Dorsolateral prefrontal cortex (tissue), 120 donors: ENCODE measurements at regions of chr15 and their contacts with region 1.

Region 1: GRCh38 chr15:29103824-29104565 is 165.6 kb downstream of the NSMCE3 start:
- DNase-seq: peak in 9 of 10 donors; percentile 56 to 88 (median 76)
- H3K4me3 ChIP-seq: peak overlapping the region in 55 of 59 donors; percentile 9 to 60 (median 44)
- H3K27ac ChIP-seq: peak overlapping the region in 56 of 59 donors; percentile 0 to 89 (median 77)
- H3K27me3 ChIP-seq: no peaks in the 10 kb centered on the region
- CTCF ChIP-seq: peak; percentile 55 to 97 (median 90)

Region 2: GRCh38 chr15:28783873-28784272 is 320.1 kb before region 1 on chr15:
- intact Hi-C with region 1: loop called in 1 of 2 experiments (anchors 5 kb)
- DNase-seq: peak in 1 of 10 donors; percentile 33
- H3K4me3 ChIP-seq: no peak overlapping the region
- H3K27ac ChIP-seq: no peak overlapping the region
- H3K27me3 ChIP-seq: peaks cover 0 to 2% (median 0%) of the 10 kb centered on the region in 45 donors
- CTCF ChIP-seq: no peak

Region 3: DNA sequence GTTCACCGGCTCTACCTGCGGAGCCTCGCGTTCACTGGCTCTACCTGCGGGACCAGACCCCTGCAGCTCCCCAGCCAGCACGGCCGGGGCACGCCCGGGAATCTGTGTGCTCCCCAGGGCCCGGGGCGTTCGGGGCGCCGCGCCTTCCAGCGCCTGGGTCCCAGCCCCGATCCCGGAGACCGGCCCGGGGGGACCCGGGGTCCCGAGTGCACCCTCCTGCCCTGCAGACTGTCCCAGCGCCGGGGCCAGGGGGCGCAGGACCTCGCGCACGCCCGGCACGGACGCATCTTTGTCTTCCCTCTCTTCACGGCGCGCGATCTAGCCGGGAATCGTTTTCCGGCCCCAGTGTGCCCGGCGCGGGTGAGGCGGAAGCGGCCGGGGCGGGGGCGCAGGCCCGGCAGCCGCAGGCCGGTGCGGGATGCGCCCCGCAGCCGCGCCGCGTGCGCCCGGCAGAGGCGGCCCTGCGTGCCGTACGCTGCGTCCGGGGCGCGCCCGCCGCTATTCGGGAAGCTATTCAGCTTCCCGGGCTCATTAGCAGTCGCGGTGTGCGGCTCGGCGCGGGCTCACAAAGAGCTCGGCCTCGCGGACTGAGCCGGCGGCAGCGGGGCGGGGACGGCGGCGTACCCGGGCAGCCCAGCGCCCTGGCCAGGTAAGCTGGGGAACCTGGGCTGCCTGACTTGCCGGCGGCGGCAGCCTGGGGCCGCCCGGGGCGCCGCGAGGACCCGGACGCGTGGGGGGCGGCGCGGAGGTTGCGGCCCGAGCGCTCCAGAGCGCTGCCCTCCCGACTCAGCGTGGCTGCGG is 218.2 kb before region 1 on chr15 and contains the start of gene APBA2:
- intact Hi-C with region 1: loop called (anchors 5 kb)
- DNase-seq: peak in 4 of 10 donors; percentile 46 to 65 (median 47)
- H3K4me3 ChIP-seq: peak within 1 kb of the TSS; percentile 52 to 85 (median 71)
- H3K27ac ChIP-seq: peak within 1 kb of the TSS in 55 of 59 donors; percentile 5 to 87 (median 70)
- H3K27me3 ChIP-seq: peaks cover 0 to 3% (median 0%) of the 10 kb centered on the region in 45 donors
- CTCF ChIP-seq: peak in 1 of 56 donors; percentile 7
- total RNA-seq, gene APBA2: 90.7 to 210 (median 166) TPM

Region 4: GRCh38 chr15:29162411-29162810 is 58.4 kb after region 1 on chr15:
- intact Hi-C with region 1: no loop called
- DNase-seq: no peak
- H3K4me3 ChIP-seq: no peak overlapping the region
- H3K27ac ChIP-seq: no peak overlapping the region
- H3K27me3 ChIP-seq: no peaks in the 10 kb centered on the region
- CTCF ChIP-seq: no peak

Region 5: DNA sequence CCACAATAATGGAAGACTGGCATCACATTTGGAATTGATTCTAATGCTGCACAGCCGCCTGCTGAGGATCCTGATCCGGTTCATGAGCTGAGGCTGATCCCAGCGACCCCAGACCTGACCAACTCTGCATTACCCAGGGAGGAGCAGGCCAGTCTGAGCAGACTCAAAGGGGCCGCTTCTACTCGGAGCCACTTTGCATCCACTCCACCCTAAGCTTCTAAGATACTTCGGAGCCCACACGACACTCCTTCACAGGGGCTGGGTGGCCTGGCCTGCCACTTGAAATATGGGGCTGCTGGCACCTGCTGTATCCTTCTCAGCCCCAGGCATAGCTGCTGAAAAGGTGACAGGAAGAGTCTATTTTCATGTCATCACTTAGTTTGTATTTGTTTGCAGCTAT is 198.9 kb after region 1 on chr15:
- intact Hi-C with region 1: no loop called
- DNase-seq: no peak
- H3K4me3 ChIP-seq: no peak overlapping the region
- H3K27ac ChIP-seq: no peak overlapping the region
- H3K27me3 ChIP-seq: no peaks in the 10 kb centered on the region
- CTCF ChIP-seq: no peak